CD8-positive, alpha-beta T cell (primary cell): ENCODE measurements at regions of chr18 and their contacts with region 1.

Region 1: GRCh38 chr18:37783771-37784170 is 218.2 kb upstream of the CELF4 start:
- DNase-seq: no peak
- ATAC-seq: no peak
- H3K4me3 ChIP-seq: no peak overlapping the region
- H3K4me3 Mint-ChIP-seq: no peak overlapping the region
- H3K27ac ChIP-seq: no peak overlapping the region
- H3K27ac Mint-ChIP-seq: no peak overlapping the region
- H3K4me1 ChIP-seq: no peaks in the 10 kb centered on the region
- H3K4me1 Mint-ChIP-seq: no peaks in the 10 kb centered on the region
- H3K27me3 ChIP-seq: no peaks in the 10 kb centered on the region
- H3K27me3 Mint-ChIP-seq: no peaks in the 10 kb centered on the region
- CTCF ChIP-seq: no peak

Region 2: DNA sequence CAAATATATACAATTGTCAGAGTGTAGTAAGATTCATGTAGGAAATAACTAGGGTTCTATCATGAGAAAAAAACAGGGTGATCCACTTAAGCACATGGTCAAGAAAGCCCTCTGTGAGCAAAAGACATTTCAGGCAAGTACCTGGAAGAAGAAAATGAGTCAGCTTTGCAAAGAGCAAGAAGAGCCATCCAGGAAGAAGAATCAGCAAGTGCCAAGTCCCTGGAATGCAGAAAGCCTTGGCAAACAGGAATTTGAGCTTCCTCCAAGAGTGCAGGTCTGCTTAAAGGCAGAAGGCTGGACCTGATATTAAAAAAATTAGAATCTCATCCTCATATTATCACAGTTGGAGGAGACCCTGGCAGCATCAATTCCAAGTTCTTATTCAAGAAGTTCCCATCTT is 29.6 kb before region 1 on chr18:
- CTCF ChIA-PET with region 1: no interaction called
- POLR2A ChIA-PET with region 1: no interaction called
- intact Hi-C with region 1: loop called in 1 of 2 experiments (anchors 1 kb)
- DNase-seq: no peak
- ATAC-seq: no peak
- H3K4me3 ChIP-seq: no peak overlapping the region
- H3K4me3 Mint-ChIP-seq: no peak overlapping the region
- H3K27ac ChIP-seq: no peak overlapping the region
- H3K27ac Mint-ChIP-seq: no peak overlapping the region
- H3K4me1 ChIP-seq: no peaks in the 10 kb centered on the region
- H3K4me1 Mint-ChIP-seq: no peaks in the 10 kb centered on the region
- H3K27me3 ChIP-seq: no peaks in the 10 kb centered on the region
- H3K27me3 Mint-ChIP-seq: no peaks in the 10 kb centered on the region
- CTCF ChIP-seq: no peak

Region 3: DNA sequence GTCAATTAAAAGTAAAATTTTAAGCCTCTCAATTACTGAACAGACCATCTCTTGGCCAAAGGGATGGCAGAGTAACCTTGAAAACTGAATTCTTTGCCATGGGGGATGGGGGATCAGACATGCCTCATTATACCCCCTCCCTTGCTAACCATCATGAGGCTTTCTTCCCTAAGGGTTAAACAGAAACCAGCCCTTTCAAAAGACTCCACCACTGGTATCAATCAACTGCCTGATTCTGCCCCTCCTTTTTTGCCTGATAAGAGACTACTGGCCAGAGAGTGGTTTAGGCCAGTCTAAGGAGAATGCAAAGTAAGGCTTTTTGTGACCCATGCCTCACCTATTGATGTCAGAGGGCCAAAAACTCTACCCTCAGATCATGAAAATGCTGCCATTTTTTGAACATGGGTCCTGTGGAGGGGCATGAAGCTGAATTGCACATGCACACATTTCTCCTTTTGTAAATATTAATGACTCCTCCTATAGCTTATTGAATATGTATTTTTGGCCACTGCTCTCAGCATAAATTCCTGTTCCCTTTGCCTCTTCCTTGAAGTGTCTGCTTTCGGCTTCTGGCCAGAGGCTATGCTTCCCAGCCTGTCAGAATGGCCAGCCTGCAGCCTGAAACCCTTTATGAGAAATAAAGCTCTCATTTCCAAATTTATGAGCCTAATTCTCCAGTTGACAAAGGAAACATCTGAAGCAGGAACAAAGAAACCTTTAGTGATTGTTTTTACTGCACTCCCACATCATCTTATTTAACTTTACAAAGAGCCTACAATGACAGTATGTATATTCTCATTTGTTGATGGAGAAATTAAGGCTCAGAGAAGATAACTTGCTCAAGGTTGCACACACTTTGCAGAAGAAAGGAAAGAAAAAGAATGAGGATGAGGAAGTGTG is 52.5 kb after region 1 on chr18:
- CTCF ChIA-PET with region 1: no interaction called
- POLR2A ChIA-PET with region 1: no interaction called
- intact Hi-C with region 1: no loop called
- DNase-seq: no peak
- ATAC-seq: no peak
- H3K4me3 ChIP-seq: no peak overlapping the region
- H3K4me3 Mint-ChIP-seq: no peak overlapping the region
- H3K27ac ChIP-seq: no peak overlapping the region
- H3K27ac Mint-ChIP-seq: no peak overlapping the region
- H3K4me1 ChIP-seq: no peaks in the 10 kb centered on the region
- H3K4me1 Mint-ChIP-seq: no peaks in the 10 kb centered on the region
- H3K27me3 ChIP-seq: no peaks in the 10 kb centered on the region
- H3K27me3 Mint-ChIP-seq: no peaks in the 10 kb centered on the region
- CTCF ChIP-seq: no peak